Heart left ventricle (tissue), 16 donors: ENCODE measurements at regions of chr1 and their contacts with region 1.

Region 1: GRCh38 chr1:220575718-220576497 is 48.0 kb downstream of the MARK1 start:
- DNase-seq: no peak
- ATAC-seq: no peak
- H3K4me3 ChIP-seq: no peak overlapping the region
- H3K27ac ChIP-seq: no peak overlapping the region
- H3K4me1 ChIP-seq: no peaks in the 10 kb centered on the region
- H3K27me3 ChIP-seq: no peaks in the 10 kb centered on the region
- CTCF ChIP-seq: no peak
- POLR2A ChIP-seq: no peak

Region 2: GRCh38 chr1:220426989-220427388 is 148.9 kb before region 1 on chr1:
- intact Hi-C with region 1: no loop called
- DNase-seq: no peak
- ATAC-seq: no peak
- H3K4me3 ChIP-seq: no peak overlapping the region
- H3K27ac ChIP-seq: no peak overlapping the region
- H3K4me1 ChIP-seq: no peaks in the 10 kb centered on the region
- H3K27me3 ChIP-seq: no peaks in the 10 kb centered on the region
- CTCF ChIP-seq: no peak
- POLR2A ChIP-seq: no peak

Region 3: DNA sequence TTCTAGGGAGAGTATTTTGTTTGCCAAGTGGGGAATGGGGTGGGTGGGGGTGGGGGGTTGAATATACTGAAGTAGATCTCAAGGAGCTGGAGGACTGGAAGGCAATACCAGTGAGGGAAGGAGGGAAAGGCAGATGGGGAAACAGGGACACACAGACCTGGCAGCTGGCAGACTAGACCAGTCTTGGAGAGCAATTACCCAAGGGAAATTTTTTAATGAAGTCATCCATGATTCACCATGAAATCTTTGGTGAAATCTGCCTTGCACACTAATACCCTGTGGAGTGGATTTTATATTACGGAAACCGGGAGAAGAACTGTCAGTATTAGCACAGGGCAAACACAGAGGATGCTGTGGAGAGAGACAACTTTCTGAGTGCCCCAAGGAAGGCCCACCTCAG is 77.7 kb before region 1 on chr1:
- intact Hi-C with region 1: no loop called
- DNase-seq: no peak
- ATAC-seq: peak in 1 of 4 donors; percentile 16
- H3K4me3 ChIP-seq: no peak overlapping the region
- H3K27ac ChIP-seq: no peak overlapping the region
- H3K4me1 ChIP-seq: no peaks in the 10 kb centered on the region
- H3K27me3 ChIP-seq: peaks cover 0 to 6% (median 0%) of the 10 kb centered on the region in 9 donors
- CTCF ChIP-seq: no peak
- POLR2A ChIP-seq: no peak

Region 4: DNA sequence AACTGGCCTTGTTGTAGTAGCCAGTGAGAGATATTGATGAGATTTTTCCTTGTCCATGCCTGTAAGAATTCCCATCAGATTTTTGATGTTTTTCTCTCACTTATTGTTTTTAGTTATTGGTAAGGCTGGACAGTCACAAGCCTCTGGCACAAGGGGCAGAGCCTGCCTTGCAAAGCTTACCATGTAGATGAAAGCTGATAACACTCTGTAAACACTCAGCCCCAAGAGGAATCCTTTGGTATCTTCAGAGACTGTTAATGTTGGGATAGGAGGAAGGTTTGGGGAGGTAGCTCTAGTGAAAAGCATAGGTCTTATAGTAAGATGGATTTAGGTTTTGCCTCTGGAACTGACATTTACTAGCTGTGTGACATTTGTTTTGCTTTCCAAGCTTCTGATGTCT is 10.2 kb before region 1 on chr1:
- intact Hi-C with region 1: loop called in 1 of 10 experiments (anchors 2 kb)
- DNase-seq: no peak
- ATAC-seq: no peak
- H3K4me3 ChIP-seq: no peak overlapping the region
- H3K27ac ChIP-seq: no peak overlapping the region
- H3K4me1 ChIP-seq: peaks cover 0 to 26% (median 6%) of the 10 kb centered on the region in 12 donors
- H3K27me3 ChIP-seq: no peaks in the 10 kb centered on the region
- CTCF ChIP-seq: no peak
- POLR2A ChIP-seq: no peak

Region 5: GRCh38 chr1:221594576-221594975 is 1018.7 kb after region 1 on chr1:
- intact Hi-C with region 1: no loop called
- DNase-seq: peak in 2 of 5 donors; percentile 23 to 29
- ATAC-seq: peak in 2 of 4 donors; percentile 58 to 62
- H3K4me3 ChIP-seq: no peak overlapping the region
- H3K27ac ChIP-seq: no peak overlapping the region
- H3K4me1 ChIP-seq: no peaks in the 10 kb centered on the region
- H3K27me3 ChIP-seq: no peaks in the 10 kb centered on the region
- CTCF ChIP-seq: no peak
- POLR2A ChIP-seq: no peak